ENCODE measurements at regions of chr10 and their contacts with region 1.

Region 1: DNA sequence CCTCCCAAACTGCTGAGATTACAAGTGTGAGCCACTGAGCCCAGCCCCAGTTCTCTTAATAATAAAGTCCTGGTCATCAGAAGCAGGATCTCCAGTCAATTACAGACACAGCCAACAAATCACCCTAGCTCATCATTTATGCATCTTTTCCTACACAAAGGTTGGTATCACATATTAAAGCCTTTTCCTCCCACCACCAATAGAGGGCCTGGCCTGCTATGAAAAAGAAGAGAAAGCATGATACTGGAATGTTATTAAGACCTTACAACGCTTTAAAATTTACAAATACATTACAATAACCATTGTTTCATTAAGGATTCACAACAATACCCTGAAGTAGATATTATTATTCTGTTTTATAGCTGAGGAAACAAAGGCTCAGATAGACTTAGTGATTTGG is 25.9 kb downstream of the VAX1 start:
- DNase-seq: peak; percentile 12
- H3K4me3 ChIP-seq: no peak overlapping the region
- H3K27ac ChIP-seq: no peak overlapping the region
- H3K4me1 ChIP-seq: no peaks in the 10 kb centered on the region
- H3K27me3 ChIP-seq: peaks cover 3% of the 10 kb centered on the region
- CTCF ChIP-seq: peak; percentile 42 to 48

Region 2: GRCh38 chr10:117159390-117159789 is 47.2 kb after region 1 on chr10:
- CTCF ChIA-PET with region 1: interaction called, 3 read pairs
- dilution Hi-C with region 1: loop called (anchors 5 kb)
- in situ Hi-C with region 1: no loop called
- intact Hi-C with region 1: loop called (anchors 2 kb)
- DNase-seq: no peak
- H3K4me3 ChIP-seq: no peak overlapping the region
- H3K27ac ChIP-seq: no peak overlapping the region
- H3K4me1 ChIP-seq: peaks cover 8% of the 10 kb centered on the region
- H3K27me3 ChIP-seq: peaks cover 54% of the 10 kb centered on the region
- CTCF ChIP-seq: no peak